Activated CD8-positive, alpha-beta memory T cell treated with anti-CD3 and anti-CD28 coated beads, Interleukin-2, amount 10 ng/mL, durations not matched to agents 7 days and 5 days (primary cell): ENCODE measurements at regions of chr12 and their contacts with region 1.

Region 1: DNA sequence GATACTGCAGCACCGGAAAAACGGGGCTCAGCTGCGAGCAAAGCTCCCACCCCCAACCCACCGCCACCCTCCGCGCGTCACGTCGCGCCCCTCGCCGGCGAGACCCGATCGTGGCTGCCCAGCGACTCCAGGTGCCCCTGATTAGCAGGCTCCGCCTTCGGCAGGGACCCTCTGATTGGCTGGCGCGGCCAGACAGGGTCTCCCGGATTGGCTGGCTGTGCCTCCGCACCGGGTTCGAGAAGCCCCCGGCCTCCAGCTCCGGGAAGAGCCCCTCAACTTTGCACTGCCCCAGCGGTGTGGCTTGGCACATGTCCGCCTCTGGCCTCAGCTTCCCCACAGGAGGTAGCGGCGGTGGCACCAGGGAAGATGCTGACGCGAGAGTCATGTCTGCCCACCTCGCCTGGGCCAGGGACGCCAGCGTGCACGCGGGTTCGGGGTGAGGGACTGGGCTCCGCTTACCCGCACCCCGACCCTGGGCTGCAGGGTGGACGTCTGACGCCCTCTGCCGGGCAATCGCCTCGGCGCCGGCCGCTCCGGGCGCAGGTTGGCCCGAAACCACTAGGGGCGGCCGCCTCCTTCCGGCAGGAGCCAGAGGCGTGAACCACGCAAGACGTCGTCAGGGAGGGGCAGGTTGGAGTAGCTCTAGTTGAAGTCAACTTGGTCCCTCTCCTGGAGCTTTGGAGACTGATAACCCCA is 498 bp upstream of the RHOF start:
- DNase-seq: peak; percentile 97
- ATAC-seq: peak; percentile 62
- H3K4me3 Mint-ChIP-seq: peak overlapping the region; percentile 93
- H3K27ac Mint-ChIP-seq: peak overlapping the region; percentile 90
- H3K4me1 Mint-ChIP-seq: peaks cover 53% of the 10 kb centered on the region
- H3K27me3 Mint-ChIP-seq: no peaks in the 10 kb centered on the region

Region 2: DNA sequence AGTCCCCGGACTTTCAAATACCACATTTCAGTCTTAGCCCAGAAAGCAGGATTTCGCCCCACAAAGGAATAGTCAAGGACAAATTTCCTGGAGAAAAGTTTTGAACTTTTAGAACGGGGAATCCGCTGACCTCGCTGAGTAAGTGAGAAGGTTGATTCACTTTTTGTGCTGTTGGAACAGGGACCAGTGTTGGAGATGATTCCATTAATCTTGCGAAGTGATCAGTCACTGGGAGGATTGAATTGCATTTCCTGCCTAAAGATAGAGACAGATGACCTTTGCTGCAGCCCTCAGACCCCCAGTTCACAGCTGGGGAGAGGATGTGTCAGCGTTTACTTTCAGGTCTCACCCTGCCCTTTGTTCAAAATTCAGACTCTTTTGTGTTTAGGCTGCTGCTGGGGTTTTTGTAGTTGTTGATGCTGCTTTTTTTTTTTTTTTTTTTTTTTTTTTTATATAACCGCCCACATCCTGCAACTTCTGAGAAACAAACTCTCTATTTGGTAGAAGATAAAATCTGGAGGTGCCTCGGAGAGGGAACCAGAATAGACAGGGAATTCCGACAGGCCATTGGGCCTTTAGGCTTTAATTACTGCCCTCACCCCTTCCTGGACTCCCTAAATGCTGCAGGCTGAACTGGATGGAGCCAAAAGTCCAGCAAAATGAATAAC is 203.4 kb before region 1 on chr12:
- CTCF ChIA-PET with region 1: no interaction called
- DNase-seq: peak; percentile 81
- ATAC-seq: peak; percentile 77
- H3K4me3 Mint-ChIP-seq: peak overlapping the region; percentile 72
- H3K27ac Mint-ChIP-seq: peak overlapping the region; percentile 99
- H3K4me1 Mint-ChIP-seq: peaks cover 27% of the 10 kb centered on the region
- H3K27me3 Mint-ChIP-seq: no peaks in the 10 kb centered on the region

Region 3: GRCh38 chr12:121626087-121626852 is 167.7 kb before region 1 on chr12 and contains the start of gene ORAI1:
- CTCF ChIA-PET with region 1: interaction called, 13 read pairs
- DNase-seq: peak; percentile 97
- ATAC-seq: peak; percentile 80
- H3K4me3 Mint-ChIP-seq: peak within 1 kb of the TSS; percentile 88
- H3K27ac Mint-ChIP-seq: peak within 1 kb of the TSS; percentile 95
- H3K4me1 Mint-ChIP-seq: peaks cover 40% of the 10 kb centered on the region
- H3K27me3 Mint-ChIP-seq: no peaks in the 10 kb centered on the region
- total RNA-seq, gene ORAI1: 53.7 to 61.1 TPM

Region 4: DNA sequence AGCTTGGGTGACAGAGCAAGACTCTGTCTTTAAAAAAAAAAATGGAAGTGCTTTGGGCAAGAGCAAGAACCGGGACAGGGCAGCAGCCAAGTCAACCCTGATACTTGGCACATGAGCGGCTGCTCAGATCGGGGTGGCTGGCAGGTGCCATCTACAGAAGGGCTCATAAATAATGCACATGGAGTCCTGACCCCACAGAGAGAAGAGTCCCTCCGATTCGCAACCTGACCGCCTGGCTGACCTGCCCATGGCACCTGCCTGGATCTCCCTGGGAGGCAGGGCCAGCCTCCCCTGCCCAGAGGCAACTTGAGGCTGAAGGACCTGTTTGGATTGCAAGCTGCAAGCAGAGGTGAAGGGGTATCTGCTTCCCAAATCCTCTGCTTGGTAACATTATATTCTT is 91.0 kb before region 1 on chr12:
- CTCF ChIA-PET with region 1: interaction called, 74 read pairs
- DNase-seq: no peak
- ATAC-seq: no peak
- H3K4me3 Mint-ChIP-seq: no peak overlapping the region
- H3K27ac Mint-ChIP-seq: no peak overlapping the region
- H3K4me1 Mint-ChIP-seq: no peaks in the 10 kb centered on the region
- H3K27me3 Mint-ChIP-seq: no peaks in the 10 kb centered on the region

Region 5: GRCh38 chr12:121754849-121755248 is 39.1 kb before region 1 on chr12:
- CTCF ChIA-PET with region 1: interaction called, 1,678 read pairs
- DNase-seq: no peak
- ATAC-seq: no peak
- H3K4me3 Mint-ChIP-seq: no peak overlapping the region
- H3K27ac Mint-ChIP-seq: no peak overlapping the region
- H3K4me1 Mint-ChIP-seq: peaks cover 17% of the 10 kb centered on the region
- H3K27me3 Mint-ChIP-seq: no peaks in the 10 kb centered on the region

Region 6: GRCh38 chr12:121839106-121839992 is 45.4 kb after region 1 on chr12:
- CTCF ChIA-PET with region 1: interaction called, 41 read pairs
- DNase-seq: peak; percentile 99
- ATAC-seq: peak; percentile 93
- H3K4me3 Mint-ChIP-seq: peak overlapping the region; percentile 98
- H3K27ac Mint-ChIP-seq: peak overlapping the region; percentile 87
- H3K4me1 Mint-ChIP-seq: peaks cover 19% of the 10 kb centered on the region
- H3K27me3 Mint-ChIP-seq: peaks cover 3% of the 10 kb centered on the region

Region 7: DNA sequence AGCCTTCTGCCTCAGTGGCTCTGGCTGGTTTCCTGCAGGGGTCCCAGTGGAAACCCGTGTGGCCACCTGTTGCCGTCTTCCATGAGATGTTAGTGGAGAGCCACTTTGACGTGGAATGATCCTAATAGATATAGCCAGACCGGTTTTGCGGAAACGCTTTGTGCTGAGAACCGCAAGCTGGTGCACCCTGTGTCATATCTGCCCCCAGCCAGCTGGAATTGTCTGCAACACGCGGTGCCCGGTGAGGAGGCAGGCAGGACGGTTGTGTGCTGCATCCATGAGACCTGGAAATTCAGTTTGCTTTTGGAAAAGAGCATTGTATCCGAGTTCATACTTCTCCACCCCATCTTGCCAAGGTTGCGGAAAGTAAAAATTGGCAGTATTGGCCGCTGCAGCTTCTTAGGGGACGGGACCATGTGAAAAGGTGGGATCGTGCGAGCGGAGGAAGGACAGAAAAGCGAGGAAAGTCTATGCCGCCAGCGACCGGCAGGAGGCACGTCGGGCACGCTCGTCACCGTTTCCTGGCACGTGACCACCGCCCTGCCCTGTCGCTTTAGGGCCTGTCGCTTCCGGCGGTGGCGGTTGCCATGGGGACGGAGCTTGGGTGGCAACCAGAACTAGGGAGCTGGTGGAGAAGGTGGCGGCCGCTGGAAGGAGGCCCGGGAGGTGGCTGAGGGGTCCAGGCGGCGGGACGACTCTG is 124.1 kb after region 1 on chr12 and contains the start of gene CFAP251:
- CTCF ChIA-PET with region 1: interaction called, 10 read pairs
- DNase-seq: peak; percentile 98
- ATAC-seq: peak; percentile 97
- H3K4me3 Mint-ChIP-seq: peak within 1 kb of the TSS; percentile 72
- H3K27ac Mint-ChIP-seq: peak within 1 kb of the TSS; percentile 87
- H3K4me1 Mint-ChIP-seq: peaks cover 14% of the 10 kb centered on the region
- H3K27me3 Mint-ChIP-seq: no peaks in the 10 kb centered on the region
- total RNA-seq, gene CFAP251: 0.21 to 0.35 TPM